Panc1 (cell line): ENCODE measurements at regions of chr2 and their contacts with region 1.

Region 1: GRCh38 chr2:204365811-204366210 is 179.5 kb upstream of the PARD3B start:
- DNase-seq: no peak
- ATAC-seq: no peak
- H3K4me3 ChIP-seq: no peak overlapping the region
- H3K27ac ChIP-seq: no peak overlapping the region
- H3K4me1 ChIP-seq: no peaks in the 10 kb centered on the region
- H3K27me3 ChIP-seq: no peaks in the 10 kb centered on the region
- CTCF ChIP-seq: no peak

Region 2: DNA sequence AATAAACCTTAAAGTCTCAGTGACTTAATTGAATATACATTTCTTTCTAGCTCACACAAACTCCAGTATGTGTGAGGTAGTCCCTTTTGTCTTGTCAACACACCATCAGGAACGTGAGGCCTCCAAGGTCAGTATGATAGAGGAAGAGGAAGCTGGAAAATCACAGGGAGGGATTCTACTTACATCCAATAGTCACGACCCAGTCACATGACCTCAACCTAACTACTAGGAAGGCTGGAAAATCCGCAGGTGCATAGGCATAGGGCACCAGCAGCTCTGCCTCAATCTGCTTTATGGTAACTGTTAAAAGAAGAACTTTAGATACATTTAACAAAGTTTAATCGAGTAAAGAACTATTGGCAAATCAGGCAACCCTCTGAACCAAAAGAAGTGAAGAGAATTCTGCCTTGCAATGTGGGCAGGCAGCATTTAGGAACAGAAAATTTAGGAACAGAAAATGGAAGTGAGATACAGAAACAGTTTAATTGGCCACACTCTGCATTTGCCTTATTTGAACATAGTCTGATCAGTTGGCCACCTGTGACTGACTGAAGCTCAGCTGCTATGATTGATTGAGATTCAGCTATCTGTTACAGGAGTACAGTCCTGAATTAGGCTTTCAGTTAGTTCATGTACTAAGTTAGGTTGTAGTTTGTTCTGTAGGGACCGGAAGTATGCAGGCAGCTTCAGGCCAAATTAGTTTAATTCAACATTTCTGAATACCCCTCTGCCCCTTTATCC is 14.5 kb after region 1 on chr2:
- CTCF ChIA-PET with region 1: no interaction called
- POLR2A ChIA-PET with region 1: no interaction called
- in situ Hi-C with region 1: no loop called
- intact Hi-C with region 1: loop called (anchors 1 kb)
- DNase-seq: no peak
- ATAC-seq: no peak
- H3K4me3 ChIP-seq: no peak overlapping the region
- H3K27ac ChIP-seq: no peak overlapping the region
- H3K4me1 ChIP-seq: no peaks in the 10 kb centered on the region
- H3K27me3 ChIP-seq: no peaks in the 10 kb centered on the region
- CTCF ChIP-seq: no peak

Region 3: DNA sequence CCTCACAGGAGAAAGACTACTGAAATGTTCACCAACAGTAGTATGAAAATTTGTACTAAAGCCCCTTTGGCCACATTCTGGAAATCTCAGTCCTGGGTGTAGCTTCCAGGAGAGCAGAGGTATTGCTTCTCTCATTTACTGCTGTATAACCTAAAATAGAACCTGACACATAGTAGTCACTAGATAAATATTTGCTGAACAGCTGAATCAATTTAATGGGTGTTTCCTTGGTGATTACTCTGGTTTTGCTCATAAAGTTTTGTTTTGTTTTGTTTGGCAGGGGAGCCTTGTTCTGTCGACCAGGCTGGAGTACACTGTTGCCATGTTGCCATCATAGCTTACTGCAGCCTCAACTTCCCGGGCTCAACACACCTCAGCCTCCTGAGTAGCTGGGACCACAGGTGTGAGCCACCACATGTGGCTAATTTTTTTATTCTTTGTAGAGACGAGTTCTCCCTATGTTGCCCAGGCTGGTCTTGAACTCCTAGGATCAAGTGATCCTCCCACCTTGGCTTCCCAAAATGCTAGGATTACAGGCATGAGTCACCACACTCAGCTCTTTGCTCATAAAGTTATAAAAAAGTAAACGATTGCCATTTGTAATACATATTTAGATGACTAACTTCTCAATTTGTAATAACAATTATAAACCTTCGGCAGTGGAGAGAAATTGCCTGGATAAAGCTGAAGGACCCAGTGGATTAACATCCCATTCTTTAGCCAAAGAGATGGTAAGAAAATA is 168.0 kb after region 1 on chr2:
- CTCF ChIA-PET with region 1: no interaction called
- POLR2A ChIA-PET with region 1: no interaction called
- in situ Hi-C with region 1: no loop called
- intact Hi-C with region 1: no loop called
- DNase-seq: peak; percentile 54
- ATAC-seq: no peak
- H3K4me3 ChIP-seq: no peak overlapping the region
- H3K27ac ChIP-seq: no peak overlapping the region
- H3K4me1 ChIP-seq: no peaks in the 10 kb centered on the region
- H3K27me3 ChIP-seq: no peaks in the 10 kb centered on the region
- CTCF ChIP-seq: no peak